Calu3 (cell line): ENCODE measurements at regions of chr1 and their contacts with region 1.

Region 1: GRCh38 chr1:216537796-216538195 is 114.5 kb upstream of the USH2A start:
- DNase-seq: no peak
- H3K4me3 Mint-ChIP-seq: no peak overlapping the region
- H3K27ac Mint-ChIP-seq: no peak overlapping the region
- H3K4me1 Mint-ChIP-seq: no peaks in the 10 kb centered on the region
- H3K27me3 Mint-ChIP-seq: no peaks in the 10 kb centered on the region
- CTCF ChIP-seq: no peak

Region 2: DNA sequence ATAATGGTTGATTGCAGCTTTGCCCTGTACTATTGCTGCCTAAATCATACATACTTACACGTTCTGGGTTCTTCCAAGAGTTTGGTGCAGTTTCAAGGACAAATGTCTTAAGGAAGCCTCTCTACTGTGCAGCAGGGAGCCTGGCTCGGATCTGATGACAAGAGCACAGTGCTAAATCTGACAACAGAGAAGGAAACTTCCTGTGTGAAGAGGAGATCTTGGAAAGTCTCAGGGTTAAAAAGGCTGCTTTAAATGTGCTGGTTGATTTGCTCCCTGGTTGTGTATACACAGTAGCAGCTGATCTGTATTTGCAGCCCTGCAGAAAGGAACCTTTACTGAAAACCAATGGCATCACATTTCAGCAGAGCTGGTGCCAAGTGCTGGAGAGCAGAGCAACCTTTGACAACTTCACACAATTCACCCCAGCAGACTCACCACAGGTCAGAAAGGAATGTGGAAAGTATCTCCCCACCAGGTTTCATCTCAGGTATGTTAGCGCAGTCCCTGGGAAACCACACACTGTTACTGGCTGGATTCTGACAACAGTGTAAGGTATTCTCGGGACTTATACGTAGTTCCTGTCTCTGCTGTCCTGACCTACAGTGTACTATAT is 540.4 kb after region 1 on chr1:
- CTCF ChIA-PET with region 1: interaction called, 10 read pairs
- intact Hi-C with region 1: no loop called
- DNase-seq: no peak
- H3K4me3 Mint-ChIP-seq: no peak overlapping the region
- H3K27ac Mint-ChIP-seq: no peak overlapping the region
- H3K4me1 Mint-ChIP-seq: no peaks in the 10 kb centered on the region
- H3K27me3 Mint-ChIP-seq: peaks cover 11% of the 10 kb centered on the region
- CTCF ChIP-seq: no peak